Activated CD4-positive, alpha-beta T cell treated with anti-CD3 and anti-CD28 coated beads, Interleukin-2, amount 10 ng/mL, durations not matched to agents 24 days and 14 days (primary cell): ENCODE measurements at regions of chr9 and their contacts with region 1.

Region 1: DNA sequence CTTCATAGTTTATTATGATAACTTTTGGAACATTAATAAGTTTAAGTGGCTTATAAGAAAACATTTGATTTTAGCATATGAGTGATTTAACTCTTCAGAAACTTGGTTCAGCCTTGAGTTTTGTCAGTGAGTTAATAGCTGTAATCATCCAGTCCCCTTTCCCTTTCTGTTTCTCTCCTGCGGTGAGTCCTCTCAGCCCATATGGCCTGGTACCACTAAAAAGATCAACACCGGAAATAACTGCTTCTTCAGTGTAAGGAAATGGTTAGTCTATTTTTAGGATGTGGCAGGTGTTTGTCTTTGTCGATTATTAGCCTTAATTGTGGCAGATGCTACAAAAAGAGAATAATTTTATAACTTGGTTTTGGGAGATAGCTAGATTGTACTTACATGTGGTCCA is 120.2 kb upstream of the GRHPR start:
- DNase-seq: peak; percentile 85
- H3K4me3 Mint-ChIP-seq: peak overlapping the region; percentile 74
- H3K27ac Mint-ChIP-seq: peak overlapping the region; percentile 88
- H3K4me1 Mint-ChIP-seq: peaks cover 43% of the 10 kb centered on the region
- H3K27me3 Mint-ChIP-seq: no peaks in the 10 kb centered on the region

Region 2: DNA sequence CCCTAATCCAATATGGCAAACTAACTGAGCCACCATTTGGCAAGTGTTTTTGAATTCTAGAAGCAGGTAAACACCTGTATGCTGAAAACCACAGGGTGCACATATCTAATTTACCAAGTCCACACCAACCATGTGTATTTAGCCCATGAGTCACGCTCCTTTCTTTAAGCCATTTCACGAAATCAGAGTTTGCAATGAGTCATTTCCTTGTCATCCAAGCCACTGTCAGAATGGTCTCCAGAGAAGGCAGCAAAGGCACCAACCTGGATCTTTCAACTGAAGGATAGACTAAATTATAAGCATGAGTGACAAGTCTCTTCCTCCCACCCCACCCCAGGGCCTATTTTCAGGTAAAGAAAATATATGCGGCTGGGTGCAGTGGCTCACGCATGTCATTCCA is 378.2 kb before region 1 on chr9:
- intact Hi-C with region 1: loop called (anchors 5 kb)
- DNase-seq: peak; percentile 68
- H3K4me3 Mint-ChIP-seq: peak overlapping the region; percentile 17
- H3K27ac Mint-ChIP-seq: peak overlapping the region; percentile 68
- H3K4me1 Mint-ChIP-seq: peaks cover 44% of the 10 kb centered on the region
- H3K27me3 Mint-ChIP-seq: no peaks in the 10 kb centered on the region

Region 3: DNA sequence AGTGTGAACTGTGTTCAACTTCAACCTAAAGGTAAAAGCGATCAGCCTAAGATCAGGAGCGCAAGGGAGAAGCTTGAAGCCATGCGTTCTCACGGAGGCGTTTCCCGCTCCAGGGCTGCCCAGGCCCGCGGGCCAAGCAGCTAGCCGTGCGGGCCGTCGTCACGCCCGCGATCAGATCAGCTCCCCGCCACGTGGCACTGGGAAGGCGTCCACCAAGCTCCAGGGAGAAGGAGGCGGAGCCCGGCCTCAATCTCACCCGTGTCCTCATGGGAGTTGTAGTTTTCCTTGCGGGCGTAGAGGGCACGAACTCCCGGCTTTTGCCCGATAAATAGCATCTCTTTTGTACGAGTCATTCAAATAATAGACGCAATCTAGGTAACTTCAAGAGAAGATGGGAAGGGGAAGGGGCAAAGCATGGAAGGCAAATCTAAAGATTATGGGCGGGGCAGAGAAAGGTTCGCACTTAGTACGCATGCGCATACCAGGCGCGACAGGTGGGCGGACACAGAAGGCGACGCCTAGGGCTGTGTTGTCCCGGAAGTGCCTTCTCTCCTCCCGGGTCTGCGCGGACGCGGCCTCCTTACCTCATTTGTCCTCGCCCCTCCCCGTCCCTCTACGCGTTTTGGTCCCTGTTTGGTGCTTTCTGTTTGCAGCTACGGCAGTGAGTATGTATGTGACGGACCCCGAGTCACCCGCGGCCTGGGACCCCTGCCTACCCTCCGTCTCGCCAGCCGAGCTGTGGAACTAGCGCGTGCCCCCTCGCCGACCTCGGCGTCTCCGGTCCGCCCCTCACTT is 222.7 kb before region 1 on chr9:
- intact Hi-C with region 1: loop called (anchors 2 kb)
- DNase-seq: peak; percentile 97
- H3K4me3 Mint-ChIP-seq: peak overlapping the region; percentile 95
- H3K27ac Mint-ChIP-seq: peak overlapping the region; percentile 96
- H3K4me1 Mint-ChIP-seq: peaks cover 23% of the 10 kb centered on the region
- H3K27me3 Mint-ChIP-seq: peaks cover 7% of the 10 kb centered on the region

Region 4: GRCh38 chr9:37119907-37120842 is 182.1 kb before region 1 on chr9 and contains the start of gene ZCCHC7:
- intact Hi-C with region 1: loop called (anchors 2 kb)
- DNase-seq: peak; percentile 97
- H3K4me3 Mint-ChIP-seq: peak within 1 kb of the TSS; percentile 92
- H3K27ac Mint-ChIP-seq: peak within 1 kb of the TSS; percentile 98
- H3K4me1 Mint-ChIP-seq: peaks cover 17% of the 10 kb centered on the region
- H3K27me3 Mint-ChIP-seq: no peaks in the 10 kb centered on the region
- total RNA-seq, gene ZCCHC7: 24.2 and 25.3 TPM in 2 replicates